ENCODE measurements at regions of chr13 and their contacts with region 1.

Region 1: DNA sequence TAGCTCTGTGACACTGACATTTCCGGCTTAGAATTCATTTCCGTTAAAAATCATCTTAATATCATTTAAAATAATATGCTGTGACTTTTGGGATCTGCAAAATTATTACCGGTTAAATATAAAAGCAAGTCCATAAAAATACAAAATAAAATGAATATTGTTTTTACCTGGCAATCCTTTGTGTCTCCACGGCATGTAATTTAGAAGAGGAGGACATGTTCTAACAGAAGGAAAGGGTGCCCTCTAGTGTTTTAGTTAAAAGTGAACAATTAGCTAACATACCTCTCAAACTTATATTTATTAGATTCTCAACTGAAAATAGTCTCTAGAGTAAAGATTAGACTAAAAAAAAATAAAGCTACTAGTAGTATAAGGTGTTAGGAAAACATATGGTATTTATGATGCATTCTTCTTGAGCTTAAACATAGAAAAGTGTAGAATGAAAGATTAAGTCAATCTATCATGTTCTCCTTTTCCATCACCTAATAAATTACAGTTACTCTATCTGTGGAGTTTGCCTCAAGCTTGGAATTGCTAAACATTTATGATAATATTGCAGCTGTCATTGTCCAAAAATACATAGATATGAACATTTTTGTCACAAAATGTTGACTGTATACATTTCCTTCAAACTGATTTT is 676.7 kb upstream of the SPRY2 start:
- DNase-seq: no peak
- ATAC-seq: peak in 1 of 2 donors; percentile 45
- H3K4me3 ChIP-seq: peak overlapping the region in 3 of 4 donors; percentile 4 to 9 (median 4)
- H3K27ac ChIP-seq: no peak overlapping the region
- H3K4me1 ChIP-seq: no peaks in the 10 kb centered on the region
- H3K27me3 ChIP-seq: no peaks in the 10 kb centered on the region
- CTCF ChIP-seq: peak; percentile 36 to 58 (median 47)
- POLR2A ChIP-seq: no peak

Region 2: GRCh38 chr13:79548902-79549301 is 1468.7 kb before region 1 on chr13:
- in situ Hi-C with region 1: no loop called
- intact Hi-C with region 1: loop called (anchors 5 kb)
- DNase-seq: no peak
- ATAC-seq: no peak
- H3K4me3 ChIP-seq: no peak overlapping the region
- H3K27ac ChIP-seq: no peak overlapping the region
- H3K4me1 ChIP-seq: no peaks in the 10 kb centered on the region
- H3K27me3 ChIP-seq: no peaks in the 10 kb centered on the region
- CTCF ChIP-seq: no peak
- POLR2A ChIP-seq: no peak

Region 3: GRCh38 chr13:80979035-80979641 is 38.5 kb before region 1 on chr13:
- in situ Hi-C with region 1: no loop called
- intact Hi-C with region 1: loop called (anchors 2 kb)
- DNase-seq: peak in 1 of 2 donors; percentile 11
- ATAC-seq: no peak
- H3K4me3 ChIP-seq: no peak overlapping the region
- H3K27ac ChIP-seq: no peak overlapping the region
- H3K4me1 ChIP-seq: no peaks in the 10 kb centered on the region
- H3K27me3 ChIP-seq: no peaks in the 10 kb centered on the region
- CTCF ChIP-seq: peak; percentile 37 to 77 (median 48)
- POLR2A ChIP-seq: no peak

Measured in gastrocnemius medialis (tissue), 4 donors.